Mammary epithelial cell (primary cell): ENCODE measurements at regions of chr6 and their contacts with region 1.

Region 1: GRCh38 chr6:134174672-134175198 is 122.3 kb upstream of the SLC2A12 start:
- DNase-seq: peak; percentile 90
- H3K4me3 ChIP-seq: peak overlapping the region; percentile 52 to 99 (median 97)
- H3K27ac ChIP-seq: peak overlapping the region; percentile 94
- H3K4me1 ChIP-seq: peaks cover 43% of the 10 kb centered on the region
- H3K27me3 ChIP-seq: no peaks in the 10 kb centered on the region
- CTCF ChIP-seq: peak in 1 of 2 donors; percentile 8

Region 2: GRCh38 chr6:134253681-134254080 is 78.9 kb after region 1 on chr6:
- CTCF ChIA-PET with region 1: no interaction called
- dilution Hi-C with region 1: no loop called
- in situ Hi-C with region 1: no loop called
- intact Hi-C with region 1: no loop called
- DNase-seq: no peak
- H3K4me3 ChIP-seq: no peak overlapping the region
- H3K27ac ChIP-seq: no peak overlapping the region
- H3K4me1 ChIP-seq: no peaks in the 10 kb centered on the region
- H3K27me3 ChIP-seq: no peaks in the 10 kb centered on the region
- CTCF ChIP-seq: no peak

Region 3: GRCh38 chr6:134288538-134289203 is 113.9 kb after region 1 on chr6:
- CTCF ChIA-PET with region 1: no interaction called
- dilution Hi-C with region 1: no loop called
- in situ Hi-C with region 1: no loop called
- intact Hi-C with region 1: loop called (anchors 1 kb)
- DNase-seq: peak; percentile 97
- H3K4me3 ChIP-seq: peak overlapping the region in 1 of 3 experiments; percentile 4
- H3K27ac ChIP-seq: peak overlapping the region; percentile 100
- H3K4me1 ChIP-seq: peaks cover 19% of the 10 kb centered on the region
- H3K27me3 ChIP-seq: no peaks in the 10 kb centered on the region
- CTCF ChIP-seq: no peak

Region 4: GRCh38 chr6:134373282-134373922 is 198.7 kb after region 1 on chr6:
- CTCF ChIA-PET with region 1: no interaction called
- dilution Hi-C with region 1: no loop called
- in situ Hi-C with region 1: no loop called
- intact Hi-C with region 1: loop called (anchors 5 kb)
- DNase-seq: peak; percentile 74
- H3K4me3 ChIP-seq: no peak overlapping the region
- H3K27ac ChIP-seq: peak overlapping the region; percentile 7
- H3K4me1 ChIP-seq: peaks cover 34% of the 10 kb centered on the region
- H3K27me3 ChIP-seq: no peaks in the 10 kb centered on the region
- CTCF ChIP-seq: no peak

Region 5: DNA sequence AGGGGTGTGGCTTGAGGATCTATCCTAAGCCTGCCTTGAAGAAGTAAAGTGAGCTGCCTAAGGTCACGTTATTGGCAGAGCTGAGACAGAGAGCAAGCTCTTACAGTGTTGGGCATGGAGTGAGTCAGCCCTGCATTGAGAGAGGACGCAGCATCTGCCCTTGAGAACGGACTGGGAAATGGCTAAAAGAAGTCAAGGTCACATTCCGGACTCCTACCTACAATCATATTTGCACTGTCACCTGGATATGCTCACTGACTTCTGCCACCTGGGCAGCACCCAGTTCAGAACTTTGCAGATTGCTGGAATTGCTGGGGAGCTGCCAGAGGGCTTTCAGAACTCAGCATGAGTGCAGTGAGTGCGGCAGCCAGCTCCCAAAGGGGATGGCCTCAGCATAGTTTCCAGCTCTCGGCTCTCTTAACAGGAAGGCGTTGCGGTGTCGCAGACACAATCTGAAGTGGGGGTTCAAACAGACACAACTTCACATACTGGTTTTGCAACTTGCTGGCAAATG is 342.5 kb after region 1 on chr6:
- CTCF ChIA-PET with region 1: no interaction called
- dilution Hi-C with region 1: no loop called
- in situ Hi-C with region 1: loop called in 1 of 2 experiments (anchors 10 kb)
- intact Hi-C with region 1: no loop called
- DNase-seq: peak; percentile 78
- H3K4me3 ChIP-seq: no peak overlapping the region
- H3K27ac ChIP-seq: peak overlapping the region; percentile 18
- H3K4me1 ChIP-seq: peaks cover 35% of the 10 kb centered on the region
- H3K27me3 ChIP-seq: no peaks in the 10 kb centered on the region
- CTCF ChIP-seq: no peak

Region 6: GRCh38 chr6:134640975-134641429 is 466.3 kb after region 1 on chr6:
- CTCF ChIA-PET with region 1: interaction called, 3 read pairs
- dilution Hi-C with region 1: loop called (anchors 5 kb)
- in situ Hi-C with region 1: no loop called
- intact Hi-C with region 1: loop called (anchors 1 kb)
- DNase-seq: peak; percentile 94
- H3K4me3 ChIP-seq: no peak overlapping the region
- H3K27ac ChIP-seq: peak overlapping the region; percentile 65
- H3K4me1 ChIP-seq: peaks cover 19% of the 10 kb centered on the region
- H3K27me3 ChIP-seq: no peaks in the 10 kb centered on the region
- CTCF ChIP-seq: peak; percentile 94 to 99

Region 7: DNA sequence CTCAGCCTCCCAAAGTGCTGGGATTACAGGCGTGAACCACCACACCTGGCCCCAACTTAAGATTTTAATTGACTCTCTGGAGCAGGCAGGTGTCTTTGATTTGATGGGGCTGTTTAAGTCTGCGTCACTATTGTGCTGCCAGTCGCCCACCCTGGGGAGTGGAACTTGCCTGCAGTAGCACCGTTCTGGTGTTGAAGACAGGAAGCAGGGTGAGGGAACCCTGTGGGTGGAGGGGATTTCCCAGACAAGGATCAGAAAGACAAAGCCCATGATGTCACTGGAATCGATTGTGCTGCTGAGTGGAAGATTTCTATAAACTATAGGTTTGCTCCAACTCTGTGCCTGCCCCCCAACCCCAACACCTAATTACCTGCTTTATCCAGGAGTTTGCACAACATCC is 764.2 kb after region 1 on chr6:
- CTCF ChIA-PET with region 1: interaction called, 3 read pairs
- dilution Hi-C with region 1: no loop called
- in situ Hi-C with region 1: loop called in 1 of 2 experiments (anchors 10 kb)
- intact Hi-C with region 1: loop called (anchors 1 kb)
- DNase-seq: no peak
- H3K4me3 ChIP-seq: no peak overlapping the region
- H3K27ac ChIP-seq: no peak overlapping the region
- H3K4me1 ChIP-seq: peaks cover 13% of the 10 kb centered on the region
- H3K27me3 ChIP-seq: no peaks in the 10 kb centered on the region
- CTCF ChIP-seq: no peak